CD8-positive, alpha-beta T cell (primary cell): ENCODE measurements at regions of chr5 and their contacts with region 1.

Region 1: GRCh38 chr5:140401362-140402257 is at the start of gene ANKHD1:
- DNase-seq: peak; percentile 91 to 100 (median 95)
- ATAC-seq: peak; percentile 77
- H3K4me3 ChIP-seq: peak within 1 kb of the TSS; percentile 86 to 92
- H3K4me3 Mint-ChIP-seq: no peak within 1 kb of the TSS
- H3K27ac ChIP-seq: peak within 1 kb of the TSS; percentile 89 to 90
- H3K27ac Mint-ChIP-seq: peak within 1 kb of the TSS; percentile 91
- H3K4me1 ChIP-seq: peaks cover 37% of the 10 kb centered on the region
- H3K4me1 Mint-ChIP-seq: peaks cover 36% of the 10 kb centered on the region
- H3K27me3 ChIP-seq: no peaks in the 10 kb centered on the region
- H3K27me3 Mint-ChIP-seq: no peaks in the 10 kb centered on the region
- CTCF ChIP-seq: no peak
- total RNA-seq, gene ANKHD1: 209 to 212 TPM

Region 2: DNA sequence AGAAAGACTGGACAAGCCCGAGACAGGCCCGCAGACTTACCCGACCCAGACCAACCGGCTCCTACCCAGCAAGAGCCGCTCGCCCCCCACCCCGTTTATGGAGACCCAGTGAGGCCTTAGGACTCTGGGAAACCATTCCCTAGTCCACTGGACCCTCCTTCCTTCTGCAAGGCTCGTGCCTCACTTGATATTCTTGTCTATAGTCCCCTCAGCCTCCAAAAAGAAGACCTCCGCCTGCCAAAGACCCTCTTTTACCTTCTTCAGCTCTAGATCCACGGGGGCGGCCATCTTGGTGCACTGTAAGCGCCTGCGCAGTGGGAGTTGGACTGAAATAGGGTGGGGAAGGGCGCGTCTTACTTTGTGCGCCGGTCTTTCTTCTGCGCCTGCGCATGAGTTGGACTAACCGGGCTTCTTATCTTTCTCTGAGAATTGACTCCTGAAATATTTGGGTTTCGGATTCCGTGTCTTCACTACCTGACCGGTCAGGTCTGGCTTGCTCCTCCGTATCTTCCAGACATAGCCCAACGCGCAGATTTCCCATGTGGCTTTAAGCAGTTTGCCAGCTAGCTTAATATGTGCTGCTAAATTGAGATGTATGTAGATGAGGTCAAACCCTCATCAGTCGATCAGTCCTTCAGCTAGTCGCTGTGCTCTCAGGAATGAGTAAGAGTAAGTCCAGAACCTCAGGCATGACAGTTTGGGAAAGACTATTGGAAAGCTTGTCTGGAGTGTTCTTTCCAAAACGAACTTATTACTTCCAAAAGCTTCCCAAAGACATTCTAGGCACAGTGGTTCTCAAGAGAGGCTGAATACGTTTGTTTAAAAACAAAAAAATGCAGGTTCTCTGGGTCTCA is 98.6 kb before region 1 on chr5 and contains the start of gene PFDN1:
- CTCF ChIA-PET with region 1: no interaction called
- POLR2A ChIA-PET with region 1: no interaction called
- intact Hi-C with region 1: loop called (anchors 1 to 5 kb)
- DNase-seq: peak; percentile 77 to 97 (median 90)
- ATAC-seq: peak; percentile 100
- H3K4me3 ChIP-seq: peak within 1 kb of the TSS; percentile 73 to 87
- H3K4me3 Mint-ChIP-seq: peak within 1 kb of the TSS; percentile 99
- H3K27ac ChIP-seq: peak within 1 kb of the TSS; percentile 61 to 82
- H3K27ac Mint-ChIP-seq: peak within 1 kb of the TSS; percentile 98
- H3K4me1 ChIP-seq: peaks cover 14% of the 10 kb centered on the region
- H3K4me1 Mint-ChIP-seq: peaks cover 29% of the 10 kb centered on the region
- H3K27me3 ChIP-seq: no peaks in the 10 kb centered on the region
- H3K27me3 Mint-ChIP-seq: peaks cover 4% of the 10 kb centered on the region
- CTCF ChIP-seq: no peak
- total RNA-seq, gene PFDN1: 28.4 to 30.5 TPM

Region 3: GRCh38 chr5:140557136-140557805 is 155.7 kb after region 1 on chr5 and contains the start of gene SRA1:
- CTCF ChIA-PET with region 1: no interaction called
- POLR2A ChIA-PET with region 1: no interaction called
- intact Hi-C with region 1: loop called in 1 of 2 experiments (anchors 2 kb)
- DNase-seq: peak; percentile 53 to 90 (median 80)
- ATAC-seq: peak; percentile 83
- H3K4me3 ChIP-seq: peak within 1 kb of the TSS; percentile 87 to 97
- H3K4me3 Mint-ChIP-seq: peak within 1 kb of the TSS; percentile 91
- H3K27ac ChIP-seq: peak within 1 kb of the TSS; percentile 89 to 97
- H3K27ac Mint-ChIP-seq: peak within 1 kb of the TSS; percentile 96
- H3K4me1 ChIP-seq: peaks cover 28% of the 10 kb centered on the region
- H3K4me1 Mint-ChIP-seq: peaks cover 47% of the 10 kb centered on the region
- H3K27me3 ChIP-seq: no peaks in the 10 kb centered on the region
- H3K27me3 Mint-ChIP-seq: no peaks in the 10 kb centered on the region
- CTCF ChIP-seq: no peak
- total RNA-seq, gene SRA1: 33.7 to 37.2 TPM

Region 4: DNA sequence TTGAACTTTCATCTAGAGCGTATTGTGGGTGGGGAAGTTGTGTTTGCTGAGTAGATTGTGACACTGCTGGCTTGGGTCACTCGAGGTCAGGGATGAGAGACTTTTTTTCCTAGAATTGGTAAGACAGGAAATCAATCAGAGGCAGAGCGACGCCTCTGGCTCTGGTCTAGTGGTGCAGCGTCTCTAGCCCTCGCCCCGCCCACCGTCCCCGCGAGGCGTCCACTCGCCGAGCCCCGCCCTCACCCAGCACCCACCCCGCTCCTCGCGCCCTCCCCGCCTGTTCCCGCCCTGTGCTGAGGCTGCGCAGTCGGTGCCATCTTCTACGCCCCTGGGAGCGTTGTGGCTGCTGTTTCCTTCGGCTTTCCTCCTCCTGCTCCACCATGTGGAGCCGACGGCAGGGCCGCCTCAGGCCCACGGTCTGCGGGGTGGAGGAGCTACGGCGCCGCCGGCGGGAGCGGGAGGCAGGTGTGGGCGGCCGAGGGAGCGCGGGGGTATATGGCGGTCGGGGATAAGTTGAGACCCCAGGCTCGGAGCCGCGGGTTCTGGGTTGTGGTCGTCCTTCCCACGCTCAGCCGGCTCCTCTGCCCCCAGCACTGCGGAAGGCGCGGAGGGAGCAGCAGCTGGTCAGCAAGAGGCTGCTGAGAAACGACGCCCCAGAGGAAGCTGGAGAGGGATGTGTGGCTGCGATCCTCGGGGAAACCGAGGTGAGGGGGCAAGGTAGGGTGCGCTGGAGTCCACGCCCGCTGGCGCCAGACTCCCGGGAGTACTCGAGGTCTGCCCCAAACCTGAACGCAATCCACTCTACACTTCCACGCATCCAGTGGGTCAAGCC is 237.8 kb after region 1 on chr5 and contains the start of gene TMCO6:
- CTCF ChIA-PET with region 1: interaction called, 3 read pairs
- POLR2A ChIA-PET with region 1: interaction called, 6 read pairs
- intact Hi-C with region 1: loop called (anchors 1 to 2 kb)
- DNase-seq: peak; percentile 94 to 98 (median 97)
- ATAC-seq: peak; percentile 99
- H3K4me3 ChIP-seq: peak within 1 kb of the TSS; percentile 91 to 95
- H3K4me3 Mint-ChIP-seq: peak within 1 kb of the TSS; percentile 92
- H3K27ac ChIP-seq: peak within 1 kb of the TSS; percentile 72 to 93
- H3K27ac Mint-ChIP-seq: peak within 1 kb of the TSS; percentile 93
- H3K4me1 ChIP-seq: peaks cover 9% of the 10 kb centered on the region
- H3K4me1 Mint-ChIP-seq: peaks cover 30% of the 10 kb centered on the region
- H3K27me3 ChIP-seq: no peaks in the 10 kb centered on the region
- H3K27me3 Mint-ChIP-seq: no peaks in the 10 kb centered on the region
- CTCF ChIP-seq: peak; percentile 70
- total RNA-seq, gene TMCO6: 16.7 to 20.6 TPM

Region 5: DNA sequence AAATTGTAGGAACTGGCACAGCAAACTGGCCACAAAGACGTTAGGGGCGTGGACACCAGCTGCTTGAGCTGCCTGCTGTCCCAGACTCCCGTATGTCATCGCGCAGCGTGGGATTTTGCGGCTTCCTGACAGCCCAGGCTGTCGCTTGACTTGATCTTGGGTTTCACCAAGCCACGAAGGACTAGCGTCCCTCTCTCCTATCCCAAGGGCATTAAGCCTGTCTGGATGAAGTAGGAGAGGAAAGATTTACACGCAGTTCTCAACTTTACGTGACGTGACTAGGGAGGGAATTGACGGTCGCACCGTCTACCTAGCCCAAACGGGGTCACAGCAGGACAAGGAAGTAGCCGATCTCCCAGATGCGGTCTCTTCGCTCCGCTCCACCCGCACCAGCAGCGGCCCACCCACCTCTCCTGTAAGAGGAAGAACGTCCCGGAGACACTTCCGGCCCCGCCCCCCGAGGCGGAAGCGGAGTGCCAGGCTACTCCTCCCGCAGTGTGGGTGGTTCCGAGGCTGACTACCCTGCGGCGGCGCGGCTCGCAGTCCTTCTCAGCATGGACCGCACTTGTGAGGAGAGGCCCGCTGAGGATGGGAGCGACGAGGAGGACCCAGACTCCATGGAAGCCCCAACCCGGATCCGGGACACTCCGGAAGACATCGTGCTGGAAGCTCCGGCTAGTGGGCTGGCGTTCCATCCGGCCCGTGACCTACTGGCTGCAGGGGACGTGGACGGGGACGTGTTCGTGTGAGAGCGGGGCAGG is 262.9 kb after region 1 on chr5 and contains the start of gene WDR55:
- CTCF ChIA-PET with region 1: no interaction called
- POLR2A ChIA-PET with region 1: no interaction called
- intact Hi-C with region 1: loop called (anchors 1 kb)
- DNase-seq: peak; percentile 90 to 98 (median 97)
- ATAC-seq: peak; percentile 92
- H3K4me3 ChIP-seq: peak within 1 kb of the TSS; percentile 80 to 95
- H3K4me3 Mint-ChIP-seq: peak within 1 kb of the TSS; percentile 89
- H3K27ac ChIP-seq: peak within 1 kb of the TSS; percentile 90 to 91
- H3K27ac Mint-ChIP-seq: peak within 1 kb of the TSS; percentile 96
- H3K4me1 ChIP-seq: peaks cover 15% of the 10 kb centered on the region
- H3K4me1 Mint-ChIP-seq: peaks cover 38% of the 10 kb centered on the region
- H3K27me3 ChIP-seq: no peaks in the 10 kb centered on the region
- H3K27me3 Mint-ChIP-seq: no peaks in the 10 kb centered on the region
- CTCF ChIP-seq: no peak
- total RNA-seq, gene WDR55: 45.4 to 49.2 TPM

Region 6: GRCh38 chr5:140700177-140701144 is 298.9 kb after region 1 on chr5 and contains the start of gene ZMAT2:
- CTCF ChIA-PET with region 1: no interaction called
- POLR2A ChIA-PET with region 1: interaction called, 5 read pairs
- intact Hi-C with region 1: loop called in 1 of 2 experiments (anchors 1 kb)
- DNase-seq: peak; percentile 84 to 98 (median 91)
- ATAC-seq: peak; percentile 99
- H3K4me3 ChIP-seq: peak within 1 kb of the TSS; percentile 66 to 72
- H3K4me3 Mint-ChIP-seq: peak within 1 kb of the TSS; percentile 95
- H3K27ac ChIP-seq: peak within 1 kb of the TSS; percentile 66 to 78
- H3K27ac Mint-ChIP-seq: peak within 1 kb of the TSS; percentile 96
- H3K4me1 ChIP-seq: peaks cover 13% of the 10 kb centered on the region
- H3K4me1 Mint-ChIP-seq: peaks cover 29% of the 10 kb centered on the region
- H3K27me3 ChIP-seq: no peaks in the 10 kb centered on the region
- H3K27me3 Mint-ChIP-seq: no peaks in the 10 kb centered on the region
- CTCF ChIP-seq: no peak
- total RNA-seq, gene ZMAT2: 31.8 to 36.6 TPM